ENCODE measurements at regions of chr14 and their contacts with region 1.

Region 1: DNA sequence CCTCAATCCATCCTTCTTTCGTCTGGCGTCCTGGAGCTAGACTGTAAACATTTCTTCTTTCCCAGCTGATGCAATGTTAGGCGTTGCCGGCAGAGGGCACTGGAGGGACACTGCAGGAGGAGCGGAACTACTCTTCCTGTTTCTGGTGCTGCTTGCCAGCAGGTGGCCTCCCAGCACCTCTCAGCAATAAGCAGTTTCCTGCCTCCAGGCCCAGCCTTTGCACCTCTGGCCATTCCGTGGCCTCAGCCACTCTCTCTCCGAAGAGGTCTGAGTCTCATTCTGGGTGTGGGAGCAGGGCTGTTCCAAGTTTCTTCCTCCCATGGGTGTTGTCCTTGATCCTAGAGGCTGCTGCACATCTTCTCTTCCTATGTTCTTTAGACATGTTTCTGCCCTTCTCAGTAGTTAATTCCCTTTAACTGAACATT is 7.5 kb upstream of the ASPG start:
- DNase-seq: peak; percentile 43
- ATAC-seq: peak; percentile 100
- H3K4me3 ChIP-seq: no peak overlapping the region
- H3K27ac ChIP-seq: no peak overlapping the region
- H3K4me1 ChIP-seq: no peaks in the 10 kb centered on the region; the same call in 1 of the 2 replicates
- H3K27me3 ChIP-seq: no peaks in the 10 kb centered on the region
- CTCF ChIP-seq: peak; percentile 100; a peak in 5 of 6 replicates
- EP300 ChIP-seq: no peak
- POLR2A ChIP-seq: no peak
- RAD21 ChIP-seq: peak; percentile 83

Region 2: DNA sequence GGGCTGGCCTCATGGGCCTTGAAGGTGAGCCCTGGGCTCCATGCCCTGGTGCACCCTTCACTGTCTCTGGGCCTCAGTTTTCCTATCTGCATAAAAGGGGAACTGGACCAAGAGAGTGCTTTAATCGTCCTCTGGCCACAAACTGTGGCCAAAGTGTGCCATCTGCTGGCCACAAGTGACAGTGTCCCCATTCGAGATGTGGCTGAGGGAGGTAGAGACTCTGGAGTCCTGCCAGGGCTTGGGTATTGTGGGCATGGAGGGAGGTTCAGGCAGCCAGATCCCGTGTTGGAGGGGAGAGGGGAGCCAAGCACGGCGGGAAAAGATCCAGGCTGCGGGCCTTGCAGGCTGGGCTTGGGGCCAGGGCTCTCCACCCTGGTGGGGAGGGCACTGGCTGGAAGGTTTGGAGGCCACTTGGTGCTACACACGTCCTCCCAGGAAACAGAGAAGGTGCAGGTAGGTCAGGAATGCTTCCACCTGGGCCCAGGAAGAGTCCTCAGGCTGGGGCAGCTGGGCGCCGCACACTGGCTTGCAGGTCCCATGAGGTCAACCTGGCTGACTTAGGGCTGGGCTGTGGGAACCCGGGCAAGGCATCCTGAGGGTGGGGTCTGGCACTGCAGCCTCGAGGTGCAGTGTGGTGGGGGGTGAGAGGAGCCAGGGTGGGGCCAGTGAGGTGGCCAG is 53.1 kb after region 1 on chr14:
- CTCF ChIA-PET with region 1: interaction called, 5 read pairs
- POLR2A ChIA-PET with region 1: no interaction called
- RAD21 ChIA-PET with region 1: interaction called, 4 read pairs
- SMC1A ChIA-PET with region 1: interaction called, 3 read pairs
- in situ Hi-C with region 1: loop called (anchors 5 kb)
- intact Hi-C with region 1: loop called (anchors 2 kb)
- DNase-seq: no peak
- ATAC-seq: peak; percentile 69
- H3K4me3 ChIP-seq: no peak overlapping the region
- H3K27ac ChIP-seq: no peak overlapping the region
- H3K4me1 ChIP-seq: no peaks in the 10 kb centered on the region
- H3K27me3 ChIP-seq: peaks cover 3 to 9% of the 10 kb centered on the region in 2 experiments; a peak in 3 of 4 replicates
- CTCF ChIP-seq: peak; percentile 43 to 55 (median 51); a peak in 5 of 6 replicates
- EP300 ChIP-seq: no peak
- POLR2A ChIP-seq: no peak
- RAD21 ChIP-seq: peak; percentile 49

Region 3: DNA sequence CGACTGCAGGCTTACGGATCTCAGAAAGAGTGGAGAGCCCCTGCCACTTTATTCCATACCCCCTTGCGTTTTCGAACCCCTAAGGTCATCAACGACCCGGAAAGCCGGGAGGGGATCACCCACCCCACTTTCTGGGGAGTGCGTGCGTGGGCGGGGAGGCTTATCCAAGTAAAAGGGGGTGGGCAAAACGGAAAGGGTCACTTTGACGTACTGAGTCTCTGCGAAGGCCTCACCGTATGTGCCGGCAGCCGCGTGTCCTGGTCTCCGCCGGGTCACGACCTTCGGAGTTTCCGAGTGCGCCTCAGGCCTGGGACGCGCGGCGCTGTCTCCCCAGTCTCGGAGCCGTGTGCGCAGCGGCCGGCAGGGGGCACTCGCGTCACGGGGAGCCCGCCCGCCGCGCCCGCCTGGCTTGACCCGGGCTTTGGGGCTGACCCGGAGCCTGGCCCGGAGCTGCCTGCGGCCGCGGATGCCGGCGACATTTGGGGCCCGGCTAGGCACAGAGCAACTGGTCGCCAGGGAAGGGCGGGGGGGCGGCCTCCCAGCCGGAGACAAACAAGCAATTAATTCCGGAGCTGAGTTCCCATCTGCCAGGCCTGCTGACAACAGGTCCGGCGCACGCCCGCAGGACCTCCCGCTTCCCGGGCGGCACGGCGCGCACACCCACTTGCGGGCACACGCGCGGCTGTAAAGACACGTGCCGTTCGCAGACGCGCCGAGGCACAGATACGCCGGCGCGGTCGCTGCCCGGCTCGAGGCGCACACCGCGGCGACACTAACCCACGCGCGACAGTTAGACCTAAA is 59.5 kb after region 1 on chr14:
- CTCF ChIA-PET with region 1: no interaction called
- POLR2A ChIA-PET with region 1: no interaction called
- RAD21 ChIA-PET with region 1: no interaction called
- SMC1A ChIA-PET with region 1: no interaction called
- in situ Hi-C with region 1: loop called (anchors 5 kb)
- intact Hi-C with region 1: no loop called
- DNase-seq: no peak
- ATAC-seq: peak; percentile 95
- H3K4me3 ChIP-seq: no peak overlapping the region
- H3K27ac ChIP-seq: no peak overlapping the region
- H3K4me1 ChIP-seq: no peaks in the 10 kb centered on the region
- H3K27me3 ChIP-seq: peaks cover 10 to 15% of the 10 kb centered on the region in 2 experiments; a peak in 3 of 4 replicates
- CTCF ChIP-seq: peak; percentile 63 to 75 (median 68)
- EP300 ChIP-seq: no peak
- POLR2A ChIP-seq: no peak
- RAD21 ChIP-seq: peak; percentile 71

Region 4: DNA sequence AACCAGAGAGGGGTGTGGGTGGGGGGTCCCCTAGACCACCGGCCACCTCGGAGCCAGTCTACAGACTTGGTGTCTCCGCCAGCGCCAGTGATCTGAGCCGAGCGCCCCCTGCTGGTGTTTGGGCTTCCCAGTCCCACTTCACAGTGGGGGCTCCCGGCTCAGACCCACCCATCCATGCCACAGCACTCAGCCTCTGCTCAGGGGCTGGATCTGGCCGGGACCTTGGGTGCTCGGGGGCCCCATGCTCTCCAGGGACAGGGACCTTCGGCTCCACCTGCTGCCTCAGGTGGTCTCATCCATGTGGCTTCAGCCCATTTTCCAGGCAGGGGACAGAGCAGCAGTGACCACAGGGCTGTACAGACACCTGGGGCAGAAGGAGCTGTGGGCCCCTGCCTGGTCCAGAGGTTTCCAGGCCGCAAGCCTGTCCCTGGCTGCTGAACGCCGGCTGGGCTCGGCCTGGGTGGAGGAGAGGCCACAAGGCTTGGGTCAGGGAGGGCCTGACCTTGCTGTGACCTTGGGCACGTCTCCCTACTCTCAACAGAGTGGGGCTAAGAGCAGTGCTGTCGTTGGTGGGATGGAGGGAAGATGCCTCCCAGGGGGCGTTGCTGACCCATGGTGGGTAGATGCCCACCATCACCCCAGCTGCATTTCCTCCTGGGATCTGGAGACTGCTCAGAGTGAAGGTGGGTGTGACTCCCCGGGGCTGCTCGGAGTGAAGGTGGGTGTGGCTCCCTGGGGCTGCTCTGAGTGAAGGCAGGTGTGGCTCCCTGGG is 146.6 kb after region 1 on chr14:
- CTCF ChIA-PET with region 1: no interaction called
- POLR2A ChIA-PET with region 1: no interaction called
- RAD21 ChIA-PET with region 1: no interaction called
- SMC1A ChIA-PET with region 1: no interaction called
- in situ Hi-C with region 1: no loop called
- intact Hi-C with region 1: loop called (anchors 5 kb)
- DNase-seq: no peak
- ATAC-seq: peak; percentile 61
- H3K4me3 ChIP-seq: no peak overlapping the region
- H3K27ac ChIP-seq: no peak overlapping the region
- H3K4me1 ChIP-seq: no peaks in the 10 kb centered on the region
- H3K27me3 ChIP-seq: no peaks in the 10 kb centered on the region; a peak in 1 of 4 replicates
- CTCF ChIP-seq: peak; percentile 33 to 58 (median 47)
- EP300 ChIP-seq: no peak
- POLR2A ChIP-seq: no peak
- RAD21 ChIP-seq: no peak

Region 5: DNA sequence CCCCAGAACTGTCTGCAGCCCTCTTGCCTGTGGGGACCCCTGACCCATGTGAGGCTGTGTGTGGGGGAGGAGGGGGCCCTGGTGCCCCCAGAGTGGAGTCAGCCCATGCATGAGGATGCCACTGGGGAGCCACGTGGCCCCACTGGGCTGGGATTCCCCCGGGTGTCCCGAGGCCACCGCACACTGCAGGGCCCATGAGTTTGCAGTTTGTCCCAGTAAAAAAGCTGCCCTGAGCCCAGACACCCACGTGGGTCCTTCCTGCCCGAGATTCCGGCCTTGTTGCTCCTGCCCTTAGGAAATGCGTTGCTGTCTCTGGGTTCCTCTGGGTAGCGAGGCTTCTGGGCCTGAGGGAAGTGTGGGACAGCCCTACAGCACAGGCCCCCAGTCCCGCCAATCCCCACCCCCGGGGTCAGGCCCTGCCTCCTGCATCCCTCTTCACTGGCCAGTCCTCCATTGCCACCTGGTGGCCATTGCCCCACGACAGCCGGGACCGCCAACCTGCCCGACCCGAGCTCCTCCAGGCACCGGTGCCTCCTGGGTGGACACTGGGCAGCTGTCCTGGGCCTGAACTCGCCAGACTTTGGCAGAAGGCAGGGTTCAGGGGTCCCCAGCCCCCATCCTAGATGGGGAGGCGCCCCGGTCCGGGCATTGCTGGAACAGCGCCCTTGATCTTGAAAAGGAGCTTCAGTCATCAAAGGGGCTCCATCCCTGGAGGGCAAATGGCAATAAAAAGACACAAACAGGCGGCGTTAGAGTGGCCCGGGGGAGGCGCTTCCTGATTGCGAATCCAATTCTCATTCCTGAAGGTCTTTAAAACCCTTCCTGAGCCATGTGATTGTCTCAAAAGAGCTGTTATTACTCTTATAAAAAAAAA is 485.9 kb after region 1 on chr14:
- CTCF ChIA-PET with region 1: interaction called, 25 read pairs
- POLR2A ChIA-PET with region 1: no interaction called
- RAD21 ChIA-PET with region 1: interaction called, 11 read pairs
- SMC1A ChIA-PET with region 1: no interaction called
- in situ Hi-C with region 1: loop called (anchors 5 kb)
- intact Hi-C with region 1: loop called (anchors 1 kb)
- DNase-seq: no peak
- ATAC-seq: peak; percentile 90
- H3K4me3 ChIP-seq: no peak overlapping the region
- H3K27ac ChIP-seq: no peak overlapping the region
- H3K4me1 ChIP-seq: no peaks in the 10 kb centered on the region
- H3K27me3 ChIP-seq: peaks cover 0 to 8% of the 10 kb centered on the region in 2 experiments; a peak in 2 of 4 replicates
- CTCF ChIP-seq: peak; percentile 57 to 82 (median 68)
- EP300 ChIP-seq: no peak
- POLR2A ChIP-seq: no peak
- RAD21 ChIP-seq: peak; percentile 75

Region 6: DNA sequence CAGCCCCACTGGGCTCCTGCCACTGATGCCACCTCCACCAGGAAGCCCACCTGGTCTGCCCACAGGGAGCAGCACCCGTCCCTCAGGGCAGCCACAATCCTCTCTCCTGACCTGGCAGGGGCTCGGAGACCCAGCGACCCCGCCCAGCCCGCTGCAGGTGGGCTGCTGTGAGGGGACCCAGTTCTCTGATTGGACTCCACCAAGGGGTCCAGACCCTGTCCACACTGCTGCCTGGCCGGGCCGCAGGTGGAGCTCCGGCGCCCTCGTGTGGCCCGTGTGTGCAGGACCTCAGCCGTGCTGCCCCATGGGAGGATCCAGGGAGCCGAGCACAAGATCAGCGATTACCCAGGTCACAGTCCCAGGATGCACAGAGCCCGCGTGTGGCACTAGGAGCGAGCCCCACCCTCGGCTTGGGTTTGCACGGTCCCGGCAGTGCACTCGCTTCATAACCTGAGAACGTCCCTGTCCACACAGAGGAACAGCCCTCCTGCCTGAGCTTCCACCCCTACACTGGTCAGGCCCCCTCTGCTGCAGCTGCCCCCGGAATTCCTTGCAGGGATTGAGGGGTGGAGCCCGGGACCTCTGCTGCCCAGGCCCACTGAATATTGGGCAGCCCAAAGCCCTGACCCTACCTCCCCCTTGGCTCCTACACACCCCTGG is 562.0 kb after region 1 on chr14:
- CTCF ChIA-PET with region 1: interaction called, 7 read pairs
- POLR2A ChIA-PET with region 1: no interaction called
- RAD21 ChIA-PET with region 1: interaction called, 5 read pairs
- SMC1A ChIA-PET with region 1: no interaction called
- in situ Hi-C with region 1: no loop called
- intact Hi-C with region 1: loop called (anchors 1 kb)
- DNase-seq: no peak
- ATAC-seq: peak; percentile 99
- H3K4me3 ChIP-seq: no peak overlapping the region
- H3K27ac ChIP-seq: no peak overlapping the region
- H3K4me1 ChIP-seq: no peaks in the 10 kb centered on the region
- H3K27me3 ChIP-seq: no peaks in the 10 kb centered on the region
- CTCF ChIP-seq: peak; percentile 92 to 94 (median 94)
- EP300 ChIP-seq: no peak
- POLR2A ChIP-seq: no peak
- RAD21 ChIP-seq: peak; percentile 91